Activated CD4-positive, alpha-beta T cell treated with anti-CD3 and anti-CD28 coated beads for 36 hours (primary cell): ENCODE measurements at regions of chr13 and their contacts with region 1.

Region 1: GRCh38 chr13:74133657-74134201 is 475 bp downstream of the KLF12 start:
- DNase-seq: peak; percentile 91
- ATAC-seq: peak; percentile 53
- H3K4me3 Mint-ChIP-seq: no peak overlapping the region
- H3K27ac Mint-ChIP-seq: peak overlapping the region; percentile 99
- H3K4me1 Mint-ChIP-seq: peaks cover 35% of the 10 kb centered on the region
- H3K27me3 Mint-ChIP-seq: no peaks in the 10 kb centered on the region

Region 2: DNA sequence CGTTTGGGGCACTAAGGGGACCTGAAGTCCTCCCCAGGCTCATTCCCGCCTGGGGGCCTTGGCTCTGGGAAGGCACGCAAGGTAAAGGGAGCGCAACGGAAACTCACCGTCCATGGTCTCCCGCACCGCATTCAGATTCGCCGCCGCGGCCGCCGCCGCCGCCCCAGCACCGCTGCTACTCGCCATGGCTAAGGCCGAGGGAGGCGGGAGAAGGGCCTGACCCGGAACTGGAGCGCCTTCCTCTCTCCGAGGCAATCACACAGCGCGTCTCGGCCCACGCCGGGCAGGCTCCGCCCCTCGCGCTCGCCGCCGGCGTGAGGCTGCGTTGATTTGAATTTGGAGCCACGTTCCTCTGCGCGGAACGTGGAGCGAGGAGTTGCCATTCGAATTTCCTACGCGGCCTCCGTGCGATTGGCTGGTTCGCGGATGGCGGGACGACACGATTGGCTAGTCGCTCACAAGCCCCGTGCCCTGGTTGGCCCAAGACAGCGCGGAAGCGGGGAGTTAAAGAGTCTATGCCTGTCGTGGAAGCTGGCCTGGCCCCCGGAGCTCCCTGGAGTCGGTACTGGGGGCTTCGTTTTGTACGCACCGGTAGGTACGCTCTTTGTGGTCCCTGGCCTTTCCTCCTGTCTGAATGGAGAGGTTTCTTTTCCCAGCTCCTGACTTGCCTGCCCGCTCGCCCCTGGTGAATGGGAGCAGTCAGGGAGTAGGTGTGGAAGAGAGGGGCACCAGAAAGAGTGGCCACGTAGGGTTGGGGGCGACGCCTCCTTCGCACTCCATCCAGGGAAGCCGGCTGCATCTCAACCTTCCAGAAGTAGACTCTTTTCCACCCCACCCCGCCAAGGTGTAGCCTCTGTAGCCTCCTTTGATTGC is 1406.1 kb before region 1 on chr13 and contains the starts of genes BORA and MZT1:
- CTCF ChIA-PET with region 1: no interaction called
- POLR2A ChIA-PET with region 1: no interaction called
- intact Hi-C with region 1: loop called in 1 of 2 experiments (anchors 5 kb)
- DNase-seq: peak; percentile 97
- ATAC-seq: peak; percentile 96
- H3K4me3 Mint-ChIP-seq: peak within 1 kb of the TSS; percentile 91
- H3K27ac Mint-ChIP-seq: peak within 1 kb of the TSS; percentile 89
- H3K4me1 Mint-ChIP-seq: peaks cover 39% of the 10 kb centered on the region
- H3K27me3 Mint-ChIP-seq: no peaks in the 10 kb centered on the region
- total RNA-seq, gene BORA: 20.8 to 21.2 TPM
- total RNA-seq, gene MZT1: 10.6 to 26.9 TPM

Region 3: DNA sequence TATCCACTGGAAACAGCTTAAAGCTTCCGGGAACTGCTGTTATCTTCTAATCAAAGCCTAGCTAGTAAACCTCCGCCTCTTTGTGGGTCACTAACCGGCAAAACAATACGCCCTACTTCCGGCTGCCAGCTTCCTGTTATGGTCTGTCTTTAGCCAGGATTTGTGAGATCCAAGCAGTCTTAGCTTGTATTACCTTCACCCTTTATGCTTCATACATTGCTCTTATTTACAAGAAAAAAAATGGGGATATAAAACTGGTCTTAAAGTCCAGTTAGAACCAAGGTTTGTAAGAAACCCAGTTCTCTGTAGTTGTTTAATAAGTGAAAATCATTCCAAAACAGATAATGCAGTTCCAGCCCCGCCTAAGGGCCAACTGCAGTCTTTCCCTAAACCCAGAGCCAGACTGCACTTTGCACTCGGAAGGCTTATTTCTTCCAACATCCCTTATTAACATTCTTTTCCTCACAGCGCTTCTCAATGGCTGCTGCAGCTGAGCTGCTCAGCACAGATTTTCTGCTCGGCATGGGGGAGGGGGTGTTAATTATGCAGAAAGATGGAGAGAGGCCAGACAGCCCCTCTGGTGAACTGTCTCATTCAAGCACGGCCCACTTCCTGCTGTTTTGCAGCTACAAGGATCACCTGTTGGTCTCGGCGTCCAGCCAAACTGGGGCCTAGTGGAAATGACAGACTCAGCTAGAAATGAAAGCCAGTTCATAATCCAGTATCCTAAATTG is 367.9 kb before region 1 on chr13:
- CTCF ChIA-PET with region 1: interaction called, 3 read pairs
- POLR2A ChIA-PET with region 1: no interaction called
- intact Hi-C with region 1: loop called (anchors 2 to 5 kb)
- DNase-seq: peak; percentile 87
- ATAC-seq: peak; percentile 90
- H3K4me3 Mint-ChIP-seq: peak overlapping the region; percentile 68
- H3K27ac Mint-ChIP-seq: peak overlapping the region; percentile 94
- H3K4me1 Mint-ChIP-seq: peaks cover 68% of the 10 kb centered on the region
- H3K27me3 Mint-ChIP-seq: no peaks in the 10 kb centered on the region

Region 4: GRCh38 chr13:73943137-73943964 is 190.4 kb before region 1 on chr13:
- CTCF ChIA-PET with region 1: interaction called, 4 read pairs
- POLR2A ChIA-PET with region 1: no interaction called
- intact Hi-C with region 1: loop called (anchors 2 kb)
- DNase-seq: no peak
- ATAC-seq: peak; percentile 88
- H3K4me3 Mint-ChIP-seq: peak overlapping the region; percentile 50
- H3K27ac Mint-ChIP-seq: peak overlapping the region; percentile 92
- H3K4me1 Mint-ChIP-seq: peaks cover 83% of the 10 kb centered on the region
- H3K27me3 Mint-ChIP-seq: no peaks in the 10 kb centered on the region

Region 5: GRCh38 chr13:74062933-74063332 is 70.8 kb before region 1 on chr13:
- CTCF ChIA-PET with region 1: no interaction called
- POLR2A ChIA-PET with region 1: interaction called, 11 read pairs
- intact Hi-C with region 1: loop called (anchors 1 kb)
- DNase-seq: peak; percentile 60
- ATAC-seq: peak; percentile 67
- H3K4me3 Mint-ChIP-seq: peak overlapping the region; percentile 64
- H3K27ac Mint-ChIP-seq: peak overlapping the region; percentile 92
- H3K4me1 Mint-ChIP-seq: peaks cover 82% of the 10 kb centered on the region
- H3K27me3 Mint-ChIP-seq: no peaks in the 10 kb centered on the region

Region 6: DNA sequence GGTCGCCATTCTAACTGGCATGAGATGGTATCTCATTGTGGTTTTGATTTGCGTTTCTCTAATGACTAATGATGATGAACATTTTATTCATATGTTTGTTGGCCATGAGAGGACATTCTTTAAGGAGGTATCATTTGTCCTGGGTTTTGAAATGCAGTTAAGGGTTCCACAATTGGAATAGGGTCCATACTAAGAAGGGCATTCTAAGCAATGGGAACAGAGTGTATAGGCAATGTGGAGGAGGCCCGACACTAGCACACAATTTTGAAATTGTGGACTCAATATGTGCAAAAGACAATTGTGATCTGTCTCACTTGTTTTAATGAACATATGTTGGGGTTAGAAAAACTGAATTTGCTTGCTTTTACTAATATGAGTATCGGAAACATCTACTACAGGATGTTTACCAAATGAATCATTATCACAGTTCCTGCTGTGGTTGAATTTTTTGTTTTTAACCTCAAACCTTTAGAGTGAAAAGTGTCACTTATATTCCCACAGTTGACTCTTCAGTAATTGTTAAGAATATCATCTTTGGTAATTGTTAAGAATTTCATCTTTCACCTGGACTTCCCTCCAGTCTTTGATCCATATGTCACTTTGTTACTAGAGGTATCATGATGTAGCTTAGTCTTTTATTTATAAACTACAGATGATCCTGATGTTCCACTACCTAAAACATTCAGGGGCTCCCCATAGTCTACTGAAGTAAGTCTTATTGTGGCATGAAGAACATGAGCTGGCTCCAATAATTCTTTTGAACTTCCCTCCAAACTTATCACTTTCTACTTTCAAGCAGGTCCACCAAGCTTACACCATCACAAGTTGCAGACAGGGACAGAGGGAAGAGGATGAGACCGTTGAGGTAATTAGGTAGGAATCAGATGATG is 110.2 kb after region 1 on chr13:
- CTCF ChIA-PET with region 1: no interaction called
- POLR2A ChIA-PET with region 1: interaction called, 4 read pairs
- intact Hi-C with region 1: loop called in 1 of 2 experiments (anchors 1 kb)
- DNase-seq: peak; percentile 20
- ATAC-seq: peak; percentile 81
- H3K4me3 Mint-ChIP-seq: peak overlapping the region; percentile 27
- H3K27ac Mint-ChIP-seq: peak overlapping the region; percentile 76
- H3K4me1 Mint-ChIP-seq: peaks cover 71% of the 10 kb centered on the region
- H3K27me3 Mint-ChIP-seq: no peaks in the 10 kb centered on the region

Region 7: DNA sequence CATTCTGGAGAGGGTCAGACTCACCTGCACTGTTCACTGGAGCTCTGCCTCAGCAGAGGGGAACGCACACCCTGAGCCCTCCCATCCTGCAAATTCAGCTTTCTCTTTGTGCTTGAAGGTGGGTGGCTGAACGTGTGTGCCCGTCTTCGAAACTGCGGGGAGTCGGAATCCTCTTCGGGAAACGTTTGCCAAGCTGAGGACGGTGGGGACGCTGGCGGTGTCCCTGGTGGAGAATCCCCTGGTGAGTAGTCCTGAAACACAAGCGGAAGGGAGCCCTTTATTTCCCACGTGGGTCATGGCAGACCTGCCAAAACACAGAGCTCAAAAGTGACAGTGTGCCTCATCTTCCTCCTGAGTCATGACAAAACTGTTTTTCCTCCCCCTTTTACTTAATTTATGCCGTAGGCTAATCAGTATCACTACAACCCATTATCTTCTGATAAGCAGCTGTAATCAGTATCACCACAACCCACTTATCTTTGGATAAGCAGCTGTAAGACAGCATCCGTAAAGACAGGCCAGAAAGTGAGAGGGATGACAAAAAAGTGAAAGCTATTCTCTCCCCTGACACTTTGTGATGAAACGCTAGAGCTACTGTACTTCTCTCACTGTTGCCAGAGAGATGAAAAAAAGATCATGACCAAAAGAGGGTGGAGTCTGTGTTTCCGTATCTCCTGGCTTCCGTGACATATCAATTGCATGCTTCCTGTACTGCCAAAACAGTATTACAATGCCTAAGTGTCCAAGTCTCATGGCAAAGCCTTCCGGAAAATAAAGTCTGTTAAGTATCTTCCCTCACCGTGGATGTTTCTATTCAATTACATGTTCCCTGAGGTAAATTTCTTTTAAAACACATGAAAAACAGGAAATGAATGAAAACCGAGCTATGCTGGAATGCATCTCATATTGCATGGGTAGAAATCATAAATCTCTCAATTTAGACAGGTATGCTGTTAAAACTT is 1192.7 kb after region 1 on chr13:
- CTCF ChIA-PET with region 1: no interaction called
- POLR2A ChIA-PET with region 1: no interaction called
- intact Hi-C with region 1: loop called in 1 of 2 experiments (anchors 5 kb)
- DNase-seq: peak; percentile 79
- ATAC-seq: peak; percentile 87
- H3K4me3 Mint-ChIP-seq: peak overlapping the region; percentile 88
- H3K27ac Mint-ChIP-seq: peak overlapping the region; percentile 98
- H3K4me1 Mint-ChIP-seq: peaks cover 35% of the 10 kb centered on the region
- H3K27me3 Mint-ChIP-seq: no peaks in the 10 kb centered on the region